Left lung (tissue), 14 donors: ENCODE measurements at regions of chr12 and their contacts with region 1.

Region 1: GRCh38 chr12:54032627-54033100 is at the start of gene HOXC5:
- DNase-seq: peak in 2 of 4 donors; percentile 53 to 82
- ATAC-seq: peak; percentile 77
- H3K4me3 ChIP-seq: peak within 1 kb of the TSS in 1 of 2 donors; percentile 0
- H3K27ac ChIP-seq: no peak within 1 kb of the TSS
- H3K4me1 ChIP-seq: peaks cover 0 to 14% of the 10 kb centered on the region in 2 donors
- H3K27me3 ChIP-seq: peaks cover 85 to 100% of the 10 kb centered on the region in 2 donors
- CTCF ChIP-seq: peak; percentile 68 to 89
- polyA plus RNA-seq, gene HOXC5: 0.11 to 0.38 (median 0.28) TPM

Region 2: DNA sequence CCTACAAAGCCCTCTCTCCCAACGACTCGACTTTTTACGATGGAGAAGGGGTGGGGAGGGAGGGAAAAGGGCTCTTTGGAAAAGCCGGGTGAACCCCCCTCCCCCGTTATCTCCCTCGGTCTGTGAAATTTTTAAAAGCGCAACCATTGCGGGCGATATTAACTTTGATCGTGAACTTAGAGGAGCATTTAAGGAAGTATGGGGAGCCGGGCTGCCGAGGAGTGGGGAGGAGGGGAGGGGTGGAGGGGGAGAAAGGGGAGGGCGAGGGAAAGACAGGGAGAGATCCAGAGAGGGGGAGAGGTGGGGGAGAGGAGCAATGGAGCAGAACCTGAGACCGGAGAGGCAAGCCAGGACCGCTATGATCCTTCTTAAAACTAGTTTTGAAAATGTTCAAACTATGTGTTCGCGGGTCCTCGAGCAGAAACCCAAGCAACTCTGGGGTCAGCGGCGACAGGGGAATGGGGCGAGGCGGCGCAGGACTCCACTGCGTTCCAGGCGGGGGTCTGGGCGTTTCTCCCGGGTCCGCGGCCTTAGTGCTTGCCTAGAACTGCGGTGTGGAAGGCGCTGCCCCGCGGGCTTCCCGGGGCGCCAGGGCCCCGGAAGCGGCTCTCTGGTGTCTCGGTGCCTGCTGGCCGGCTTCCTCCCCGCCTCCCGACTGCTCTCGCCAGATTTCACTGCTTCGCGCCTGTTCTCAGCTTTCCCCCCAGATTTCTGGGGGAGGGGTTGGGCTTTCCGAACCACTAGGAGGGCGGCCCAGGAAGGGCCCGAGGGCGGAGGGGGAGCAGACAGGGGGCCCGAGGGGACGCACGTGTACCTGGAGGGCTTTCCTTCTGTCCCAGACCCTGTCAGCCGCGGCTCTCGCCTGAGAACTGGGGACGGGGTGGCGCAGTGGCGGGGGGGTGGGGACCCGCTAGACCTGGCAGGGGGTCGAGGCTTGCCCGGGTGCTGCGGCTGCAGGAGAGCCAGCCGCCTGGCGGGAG is 58.3 kb before region 1 on chr12 and contains the start of gene HOTAIR:
- intact Hi-C with region 1: no loop called
- DNase-seq: peak in 1 of 4 donors; percentile 69
- ATAC-seq: peak; percentile 39
- H3K4me3 ChIP-seq: no peak within 1 kb of the TSS
- H3K27ac ChIP-seq: no peak within 1 kb of the TSS
- H3K4me1 ChIP-seq: peaks cover 0 to 23% of the 10 kb centered on the region in 2 donors
- H3K27me3 ChIP-seq: peaks cover 99 to 100% of the 10 kb centered on the region in 2 donors
- CTCF ChIP-seq: no peak
- polyA plus RNA-seq, gene HOTAIR: not detected

Region 3: DNA sequence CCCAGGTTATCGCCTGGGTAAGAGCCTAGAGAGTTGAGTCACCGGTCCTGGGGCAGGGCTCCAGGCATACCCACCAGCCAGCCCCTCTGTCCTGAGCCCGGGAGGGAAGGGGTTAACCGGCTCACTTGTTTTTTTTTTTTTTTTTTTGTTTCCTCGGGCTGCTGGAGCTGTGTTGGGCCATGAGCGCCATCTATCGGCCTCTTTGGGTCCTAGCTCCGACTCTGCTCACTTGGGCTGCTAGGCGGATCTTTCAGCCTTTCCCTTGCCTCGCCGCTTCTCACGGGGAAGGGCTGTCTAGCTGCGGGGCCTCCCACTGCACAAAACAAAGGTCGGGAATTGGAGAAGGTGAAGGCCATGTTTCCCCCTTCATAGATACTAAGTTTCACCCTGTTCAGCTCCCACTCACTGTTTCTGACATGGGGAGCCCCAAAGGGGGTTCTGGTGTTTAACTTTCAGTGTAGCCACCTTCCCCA is 158.9 kb after region 1 on chr12:
- intact Hi-C with region 1: loop called in 1 of 2 experiments (anchors 5 kb)
- DNase-seq: peak; percentile 81 to 93 (median 84)
- ATAC-seq: peak; percentile 80
- H3K4me3 ChIP-seq: no peak overlapping the region
- H3K27ac ChIP-seq: no peak overlapping the region
- H3K4me1 ChIP-seq: peaks cover 6 to 37% of the 10 kb centered on the region in 2 donors
- H3K27me3 ChIP-seq: peaks cover 4 to 63% of the 10 kb centered on the region in 2 donors
- CTCF ChIP-seq: peak; percentile 76 to 87

Region 4: DNA sequence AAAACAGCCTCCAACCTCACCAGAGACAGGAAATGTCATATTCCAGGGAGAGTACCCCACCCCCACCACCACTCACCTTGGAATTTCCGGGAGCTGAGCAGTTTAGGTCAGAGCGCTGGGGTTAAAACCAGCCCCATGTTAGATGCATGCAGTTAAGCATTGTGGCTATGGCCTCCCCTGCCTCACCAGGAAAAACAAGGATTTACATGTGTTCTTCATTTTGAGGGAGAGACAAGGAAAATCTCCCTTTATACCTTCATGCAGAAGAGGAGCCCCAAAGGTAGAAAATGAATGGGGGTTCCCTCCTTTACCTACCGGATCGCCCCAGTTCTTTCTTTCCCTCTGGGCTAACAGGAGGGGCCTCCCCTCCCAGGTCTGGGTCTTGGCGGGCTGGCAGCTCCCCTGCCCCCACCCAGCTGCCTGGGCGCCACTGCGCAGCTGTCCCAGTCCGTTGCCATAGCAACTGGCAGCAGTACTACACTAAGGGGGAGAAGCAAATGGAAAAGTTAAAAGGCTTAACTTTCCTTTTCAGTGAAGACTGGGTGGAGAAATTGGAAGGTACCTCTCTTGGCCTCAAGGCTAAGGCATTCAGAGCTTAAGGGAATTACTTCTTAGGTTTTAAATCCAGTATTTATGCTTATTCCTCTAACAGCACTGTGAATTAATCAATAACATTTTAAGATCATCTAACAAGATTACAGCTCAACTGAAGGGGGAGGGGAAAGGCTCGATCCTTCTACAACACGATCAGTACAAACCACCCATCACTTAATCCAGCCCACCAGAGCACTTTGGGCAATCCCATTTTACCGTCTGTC is 226.7 kb after region 1 on chr12:
- intact Hi-C with region 1: no loop called
- DNase-seq: peak; percentile 81 to 95 (median 88)
- ATAC-seq: peak; percentile 95
- H3K4me3 ChIP-seq: peak overlapping the region; percentile 23 to 39
- H3K27ac ChIP-seq: peak overlapping the region; percentile 43 to 85
- H3K4me1 ChIP-seq: peaks cover 6 to 47% of the 10 kb centered on the region in 2 donors
- H3K27me3 ChIP-seq: no peaks in the 10 kb centered on the region
- CTCF ChIP-seq: no peak